Breast epithelium (tissue), 4 donors: ENCODE measurements at regions of chr18 and their contacts with region 1.

Region 1: DNA sequence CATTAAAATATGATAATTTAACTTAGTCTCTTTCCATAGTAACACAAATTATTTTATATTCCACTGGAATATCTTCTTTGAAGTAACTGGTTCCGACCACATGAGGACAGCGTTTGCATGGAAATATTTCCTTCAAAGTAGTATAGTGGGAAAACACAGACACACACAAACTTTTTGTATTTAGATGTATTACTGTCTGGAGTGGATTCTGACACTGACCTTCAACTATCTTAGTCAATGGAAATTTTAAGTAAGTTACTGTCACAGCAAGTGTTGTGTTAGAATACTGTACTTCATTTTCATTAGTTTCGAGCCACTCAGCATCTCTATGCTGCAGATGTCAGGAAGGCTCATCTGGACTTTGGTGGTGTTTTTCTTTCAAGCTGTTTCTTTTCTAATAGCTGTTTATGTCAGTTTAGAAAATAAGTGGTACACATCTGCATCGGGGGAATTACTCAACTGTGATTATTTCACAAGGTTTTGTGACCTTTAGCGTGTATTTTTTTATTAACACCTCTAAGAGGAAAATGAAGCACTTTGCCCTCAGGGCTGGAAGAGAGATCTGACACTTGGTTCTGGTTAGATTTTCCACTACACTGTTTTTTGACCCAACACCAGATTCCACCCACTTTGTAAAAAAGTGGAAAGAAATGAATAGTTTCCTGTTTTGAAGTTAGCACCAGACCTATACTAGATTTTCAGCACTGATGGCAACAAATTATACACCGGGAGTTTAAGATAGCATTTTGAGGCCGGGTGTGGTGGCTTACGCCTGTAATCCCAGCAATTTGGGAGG is 18.9 kb upstream of the THOC1 start:
- DNase-seq: no peak
- H3K4me3 ChIP-seq: no peak overlapping the region
- H3K27ac ChIP-seq: no peak overlapping the region
- H3K4me1 ChIP-seq: no peaks in the 10 kb centered on the region
- H3K27me3 ChIP-seq: no peaks in the 10 kb centered on the region
- CTCF ChIP-seq: peak in 2 of 3 donors; percentile 50 to 56
- POLR2A ChIP-seq: no peak

Region 2: GRCh38 chr18:316393-316792 is 29.7 kb after region 1 on chr18:
- intact Hi-C with region 1: no loop called
- DNase-seq: no peak
- H3K4me3 ChIP-seq: no peak overlapping the region
- H3K27ac ChIP-seq: no peak overlapping the region
- H3K4me1 ChIP-seq: no peaks in the 10 kb centered on the region
- H3K27me3 ChIP-seq: no peaks in the 10 kb centered on the region
- CTCF ChIP-seq: no peak
- POLR2A ChIP-seq: no peak

Region 3: DNA sequence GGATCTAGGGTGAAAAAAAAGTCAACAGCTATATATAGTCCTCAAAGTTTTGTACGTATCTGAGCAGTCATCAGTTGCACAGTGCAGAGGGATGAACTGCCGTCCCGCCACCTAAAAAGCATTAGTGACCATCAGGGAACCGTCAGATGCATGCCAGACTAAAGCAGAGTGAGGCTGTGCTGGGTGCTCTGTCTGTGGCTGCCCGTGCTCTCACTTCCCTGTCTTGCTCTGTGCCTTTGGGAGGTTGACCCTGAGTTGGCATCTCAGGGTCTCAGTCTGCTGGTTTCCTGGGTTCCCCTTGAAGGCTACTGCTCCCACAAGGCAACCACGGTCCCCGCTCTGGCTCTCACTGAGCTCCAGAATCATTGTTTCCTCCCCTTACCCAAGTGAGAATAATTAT is 321.2 kb after region 1 on chr18:
- intact Hi-C with region 1: loop called (anchors 10 kb)
- DNase-seq: no peak
- H3K4me3 ChIP-seq: no peak overlapping the region
- H3K27ac ChIP-seq: no peak overlapping the region
- H3K4me1 ChIP-seq: no peaks in the 10 kb centered on the region
- H3K27me3 ChIP-seq: no peaks in the 10 kb centered on the region
- CTCF ChIP-seq: no peak
- POLR2A ChIP-seq: no peak